ENCODE measurements at regions of chr1 and their contacts with region 1.

Region 1: GRCh38 chr1:116570358-116571200 is at the start of gene CD58:
- DNase-seq: peak; percentile 80
- H3K4me3 Mint-ChIP-seq: peak within 1 kb of the TSS; percentile 81
- H3K27ac Mint-ChIP-seq: peak within 1 kb of the TSS; percentile 38
- H3K4me1 Mint-ChIP-seq: peaks cover 39% of the 10 kb centered on the region
- H3K27me3 Mint-ChIP-seq: peaks cover 7% of the 10 kb centered on the region
- total RNA-seq, gene CD58: 3.9 to 4.2 TPM

Region 2: DNA sequence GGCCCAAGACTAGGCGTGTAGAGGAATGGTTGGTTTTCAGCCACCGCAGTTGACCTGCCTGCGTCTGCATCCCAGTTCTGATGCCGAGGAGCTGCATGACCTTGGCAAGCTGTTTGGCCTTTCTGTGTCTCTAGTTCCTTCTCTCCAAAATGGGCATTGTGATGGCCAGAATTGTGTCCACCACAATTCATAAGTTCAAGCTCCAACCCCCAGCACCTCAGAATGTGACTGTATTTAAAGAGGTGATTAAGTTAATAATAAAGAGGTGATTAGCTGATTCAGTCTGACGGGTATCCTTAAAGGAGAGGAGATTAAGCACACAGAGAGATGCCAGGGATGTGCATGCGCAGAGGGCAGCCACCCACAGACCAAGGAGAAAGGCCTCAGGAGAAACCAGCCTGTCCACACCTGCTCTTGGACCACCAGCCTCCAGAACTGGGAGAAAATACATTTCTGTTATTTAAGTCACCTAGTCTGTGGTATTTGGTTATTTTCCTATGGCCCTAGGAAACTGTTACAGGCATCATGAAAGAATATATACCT is 430.9 kb before region 1 on chr1:
- CTCF ChIA-PET with region 1: interaction called, 4 read pairs
- intact Hi-C with region 1: loop called (anchors 5 kb)
- DNase-seq: no peak
- H3K4me3 Mint-ChIP-seq: no peak overlapping the region
- H3K27ac Mint-ChIP-seq: no peak overlapping the region
- H3K4me1 Mint-ChIP-seq: peaks cover 7% of the 10 kb centered on the region
- H3K27me3 Mint-ChIP-seq: no peaks in the 10 kb centered on the region

Region 3: DNA sequence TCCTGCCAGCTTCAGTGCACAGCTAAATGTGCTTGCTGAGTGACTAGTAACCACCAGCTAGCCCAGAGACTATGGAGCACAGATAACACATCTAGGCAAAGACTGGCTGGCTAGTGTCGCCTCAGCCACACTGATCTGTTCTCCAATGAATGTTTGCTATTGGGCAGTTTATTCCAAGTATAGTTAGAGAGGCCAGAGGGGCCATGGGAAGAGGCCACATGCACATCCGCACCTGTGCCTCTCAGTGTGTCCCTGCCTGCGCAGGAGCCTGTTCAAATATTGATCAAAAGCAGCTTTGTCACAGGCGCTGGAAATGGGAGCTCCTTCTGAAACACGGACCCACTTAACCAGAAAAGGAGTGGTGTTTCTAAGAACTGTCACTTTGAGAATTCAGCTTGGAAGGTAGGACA is 248.8 kb before region 1 on chr1:
- CTCF ChIA-PET with region 1: no interaction called
- intact Hi-C with region 1: no loop called
- DNase-seq: no peak
- H3K4me3 Mint-ChIP-seq: no peak overlapping the region
- H3K27ac Mint-ChIP-seq: no peak overlapping the region
- H3K4me1 Mint-ChIP-seq: peaks cover 57% of the 10 kb centered on the region
- H3K27me3 Mint-ChIP-seq: no peaks in the 10 kb centered on the region

Region 4: DNA sequence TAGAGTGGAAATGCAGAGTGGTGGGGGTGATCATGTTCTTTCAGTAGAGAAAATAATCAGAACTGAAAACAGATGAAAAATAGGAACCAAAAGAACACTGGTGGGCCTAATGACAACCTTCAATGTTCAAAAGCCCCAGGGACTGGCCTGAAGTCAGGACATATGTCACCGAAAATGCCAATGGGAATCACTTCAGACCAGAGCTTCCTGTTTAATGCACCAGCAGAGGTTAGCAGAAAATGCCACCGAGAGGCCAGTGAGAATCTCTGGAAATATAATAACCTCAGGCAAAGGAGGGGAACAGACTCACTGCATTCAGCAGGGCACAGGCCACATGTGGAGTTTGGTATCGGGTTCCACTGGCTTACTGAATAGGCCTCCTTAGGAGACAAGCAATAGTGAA is 16.2 kb after region 1 on chr1:
- CTCF ChIA-PET with region 1: interaction called, 11 read pairs
- intact Hi-C with region 1: no loop called
- DNase-seq: no peak
- H3K4me3 Mint-ChIP-seq: no peak overlapping the region
- H3K27ac Mint-ChIP-seq: no peak overlapping the region
- H3K4me1 Mint-ChIP-seq: peaks cover 16% of the 10 kb centered on the region
- H3K27me3 Mint-ChIP-seq: no peaks in the 10 kb centered on the region

Region 5: DNA sequence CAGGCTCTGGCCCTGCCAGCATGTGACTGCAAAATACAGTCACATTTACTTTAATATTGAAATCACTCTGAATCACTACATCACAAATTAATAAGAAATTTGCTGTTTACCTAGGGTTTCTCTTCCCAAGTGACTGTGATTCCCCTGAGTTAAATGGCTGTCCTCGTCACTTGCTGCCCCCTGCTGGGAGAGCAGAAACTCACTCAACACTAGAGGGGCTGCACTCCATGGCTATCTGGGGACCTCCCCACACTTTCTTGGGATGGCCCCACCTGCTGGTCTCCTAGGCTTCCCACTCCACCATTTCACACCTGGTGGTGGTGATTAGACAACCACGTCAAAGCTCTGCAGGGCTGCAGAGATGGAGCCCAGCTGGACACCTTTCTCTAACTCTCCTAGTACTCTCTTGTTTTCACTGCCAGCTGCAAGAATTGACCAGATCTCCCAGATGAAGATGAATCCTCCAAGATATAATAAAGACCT is 247.0 kb after region 1 on chr1:
- CTCF ChIA-PET with region 1: interaction called, 4 read pairs
- intact Hi-C with region 1: loop called (anchors 1 kb)
- DNase-seq: peak; percentile 91
- H3K4me3 Mint-ChIP-seq: no peak overlapping the region
- H3K27ac Mint-ChIP-seq: peak overlapping the region; percentile 98
- H3K4me1 Mint-ChIP-seq: peaks cover 66% of the 10 kb centered on the region
- H3K27me3 Mint-ChIP-seq: no peaks in the 10 kb centered on the region

Region 6: DNA sequence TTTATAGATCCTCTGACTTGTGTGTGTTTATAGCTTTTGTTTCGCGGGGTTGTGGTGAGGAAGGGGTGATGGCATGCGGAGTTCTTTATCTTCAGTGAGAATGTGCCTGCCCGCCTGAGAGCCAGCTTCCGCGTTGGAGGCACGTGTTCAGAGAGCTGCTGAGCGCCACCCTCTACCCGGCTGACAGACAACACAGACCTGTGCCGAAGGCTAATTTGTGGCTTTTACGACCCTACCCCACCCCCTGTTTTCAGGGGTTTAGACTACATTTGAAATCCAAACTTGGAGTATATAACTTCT is 416.6 kb after region 1 on chr1:
- CTCF ChIA-PET with region 1: no interaction called
- intact Hi-C with region 1: loop called (anchors 5 kb)
- DNase-seq: peak; percentile 83
- H3K4me3 Mint-ChIP-seq: peak overlapping the region; percentile 68
- H3K27ac Mint-ChIP-seq: peak overlapping the region; percentile 91
- H3K4me1 Mint-ChIP-seq: peaks cover 60% of the 10 kb centered on the region
- H3K27me3 Mint-ChIP-seq: no peaks in the 10 kb centered on the region

Region 7: GRCh38 chr1:117367047-117368018 is 796.8 kb after region 1 on chr1 and contains the start of gene MAN1A2:
- CTCF ChIA-PET with region 1: no interaction called
- intact Hi-C with region 1: loop called (anchors 10 kb)
- DNase-seq: peak; percentile 76
- H3K4me3 Mint-ChIP-seq: peak within 1 kb of the TSS; percentile 94
- H3K27ac Mint-ChIP-seq: peak within 1 kb of the TSS; percentile 94
- H3K4me1 Mint-ChIP-seq: peaks cover 48% of the 10 kb centered on the region
- H3K27me3 Mint-ChIP-seq: no peaks in the 10 kb centered on the region
- total RNA-seq, gene MAN1A2: 14.6 to 17.4 TPM

Measured in activated naive CD4-positive, alpha-beta T cell treated with anti-CD3 and anti-CD28 coated beads for 36 hours (primary cell).